Right ventricle myocardium inferior (tissue), 1 donor: ENCODE measurements at regions of chr4 and their contacts with region 1.

Region 1: GRCh38 chr4:70901984-70902576 is at the start of gene MOB1B:
- DNase-seq: peak; percentile 93
- ATAC-seq: peak; percentile 97
- total RNA-seq, gene MOB1B: 17.6 TPM

Region 2: DNA sequence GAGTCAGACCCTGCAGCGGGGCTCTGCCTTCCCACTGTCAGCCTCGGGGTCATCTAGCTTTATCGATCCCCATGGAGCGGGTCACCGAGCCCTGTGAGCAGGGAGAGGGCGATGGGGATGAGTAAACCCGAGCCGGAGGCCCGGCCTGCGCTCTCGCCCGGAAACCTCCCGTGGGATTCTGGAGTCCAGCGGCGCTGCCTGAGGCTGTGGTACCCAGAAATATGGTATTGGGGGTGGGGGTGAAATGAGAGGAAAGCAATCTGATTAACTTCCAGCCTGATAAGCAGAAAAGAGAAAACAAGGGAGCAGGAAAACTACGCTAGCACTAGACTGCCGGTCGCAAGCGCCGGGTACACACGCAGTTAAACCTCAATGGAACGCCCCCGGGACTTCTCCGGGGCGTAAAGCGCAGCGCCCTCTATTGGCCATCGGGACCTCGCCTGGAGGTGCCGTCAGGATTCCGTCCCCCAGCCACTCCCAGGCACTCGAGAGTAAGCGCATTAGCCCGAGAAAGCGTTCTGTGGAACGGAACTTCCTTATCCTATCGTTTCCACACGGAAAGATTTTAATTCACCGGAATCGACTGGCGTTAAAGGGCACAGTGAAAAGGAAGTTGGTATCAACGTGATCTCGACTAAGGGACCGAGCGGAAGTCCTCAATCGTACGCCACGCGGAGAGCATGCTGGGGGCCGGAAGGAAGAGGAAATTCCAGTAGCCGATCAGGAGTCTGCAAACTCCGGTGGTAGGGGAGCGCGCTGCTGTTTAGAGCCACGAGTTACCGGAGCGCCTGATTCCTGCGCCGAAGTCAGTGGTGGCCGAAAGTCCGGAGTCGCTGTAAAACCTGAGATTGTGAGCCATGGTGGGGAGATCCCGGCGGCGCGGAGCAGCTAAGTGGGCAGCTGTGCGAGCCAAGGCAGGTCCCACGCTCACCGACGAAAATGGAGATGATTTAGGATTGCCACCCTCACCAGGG is 214.0 kb before region 1 on chr4 and contains the start of gene UTP3:
- intact Hi-C with region 1: loop called (anchors 2 kb)
- DNase-seq: peak; percentile 95
- ATAC-seq: peak; percentile 98
- total RNA-seq, gene UTP3: 14.8 TPM

Region 3: GRCh38 chr4:70993181-70994068 is 91.3 kb after region 1 on chr4 and contains the start of gene DCK:
- intact Hi-C with region 1: loop called (anchors 5 kb)
- DNase-seq: peak; percentile 96
- ATAC-seq: peak; percentile 99
- total RNA-seq, gene DCK: 7.2 TPM